GM10248 (cell line): ENCODE measurements at regions of chr5 and their contacts with region 1.

Region 1: DNA sequence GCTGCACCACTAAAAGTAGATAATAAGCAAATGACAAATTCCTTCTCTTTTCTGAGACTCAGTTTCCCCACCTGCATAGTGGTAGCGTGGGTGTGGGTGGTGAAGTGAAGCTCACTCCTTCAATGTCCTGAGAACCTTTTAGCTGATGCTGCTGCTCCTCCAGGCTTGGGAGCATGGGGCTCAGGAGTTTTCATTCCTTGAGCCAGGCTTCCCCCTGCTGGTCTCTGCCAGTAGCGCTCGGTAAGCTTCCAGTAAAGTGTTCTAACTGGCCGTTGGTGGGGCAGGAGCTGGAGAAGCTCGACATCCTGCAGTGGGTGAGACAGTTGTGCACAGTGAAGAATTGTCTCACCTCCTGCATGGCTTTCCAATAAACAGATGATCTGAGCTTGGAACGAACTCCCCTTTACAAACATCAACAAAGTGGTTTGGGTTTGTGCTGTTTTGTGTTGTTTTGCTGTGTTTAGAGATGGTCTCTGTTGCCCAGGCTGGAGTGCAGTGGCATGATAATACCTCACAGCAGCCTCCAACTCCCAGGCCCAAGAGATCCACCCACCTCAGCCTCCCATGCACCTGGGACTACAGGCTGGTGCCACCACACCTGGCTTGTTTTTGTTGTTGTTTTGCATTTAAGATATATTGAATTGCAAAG is 34.6 kb downstream of the SPARC start:
- DNase-seq: peak; percentile 83
- CTCF ChIP-seq: peak; percentile 90

Region 2: DNA sequence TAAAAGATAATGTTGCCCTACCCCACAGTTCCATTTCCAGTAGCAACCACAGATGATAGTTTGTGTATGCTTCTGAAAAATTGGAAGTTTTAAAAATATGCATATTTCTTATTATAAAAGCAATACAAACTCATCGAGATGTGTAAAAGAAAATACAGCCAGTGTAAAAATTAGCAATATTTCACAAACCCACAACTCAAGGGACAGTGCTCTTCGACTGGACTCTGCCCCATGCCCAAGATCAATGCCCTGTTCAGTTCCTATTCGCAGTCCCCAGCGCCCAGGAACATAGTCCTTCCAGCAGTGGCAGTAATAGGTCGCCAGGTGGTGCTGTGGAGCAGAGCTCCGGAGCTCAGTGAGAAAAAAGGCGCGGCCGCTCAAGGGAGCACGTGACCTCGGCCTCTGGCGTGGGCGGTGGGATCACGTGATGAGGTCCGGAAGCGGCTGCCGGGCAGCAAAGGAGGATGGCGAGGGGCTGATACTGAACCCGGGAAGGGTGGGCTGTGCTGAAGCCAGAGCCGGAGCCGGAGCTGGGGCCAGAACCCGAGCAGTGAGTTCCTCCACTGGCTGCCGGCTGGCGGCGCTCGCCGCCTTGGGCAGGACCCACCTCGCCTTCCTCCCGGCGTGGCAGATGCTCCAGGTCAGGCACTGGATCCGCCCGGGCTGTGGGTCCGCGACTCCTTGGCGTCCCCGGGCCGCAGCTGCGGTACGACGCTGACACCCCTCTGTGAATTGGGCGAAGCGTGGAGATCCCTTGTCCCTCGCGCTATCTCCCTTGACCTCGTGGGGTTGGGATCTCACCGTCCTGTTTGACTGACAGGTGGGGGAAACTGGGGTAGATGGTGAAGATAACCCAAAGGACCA is 204.7 kb before region 1 on chr5 and contains the start of gene SLC36A1:
- CTCF ChIA-PET with region 1: interaction called, 42 read pairs
- POLR2A ChIA-PET with region 1: interaction called, 3 read pairs
- DNase-seq: peak; percentile 94
- CTCF ChIP-seq: peak; percentile 92

Region 3: DNA sequence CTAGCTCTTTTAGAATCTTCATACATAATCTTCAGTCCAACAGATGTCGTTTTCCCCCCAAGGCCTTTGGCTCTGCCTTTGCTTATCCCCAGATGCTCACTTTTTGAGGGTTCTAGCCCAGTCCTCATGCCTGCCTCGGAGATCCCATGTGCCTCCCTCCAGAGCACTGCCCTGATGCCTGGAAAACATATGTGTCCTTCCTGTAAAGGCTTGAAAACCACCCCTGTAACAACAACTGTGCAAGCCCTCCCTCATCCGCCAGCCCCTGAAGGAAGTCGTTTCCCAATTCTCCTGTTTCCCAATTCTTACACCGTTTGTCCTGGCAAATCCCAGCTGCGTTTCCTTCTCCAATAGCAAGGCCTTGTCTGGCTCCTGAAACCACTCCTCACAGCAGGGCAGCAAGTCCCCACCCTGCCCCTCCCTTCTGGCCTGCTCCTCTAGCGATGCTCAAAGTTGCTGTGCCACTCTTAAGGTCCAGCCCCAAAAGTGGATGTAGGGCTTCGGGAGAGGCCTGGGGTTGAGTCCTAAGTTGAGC is 152.6 kb before region 1 on chr5:
- CTCF ChIA-PET with region 1: interaction called, 15 read pairs
- POLR2A ChIA-PET with region 1: no interaction called
- DNase-seq: no peak
- CTCF ChIP-seq: no peak

Region 4: DNA sequence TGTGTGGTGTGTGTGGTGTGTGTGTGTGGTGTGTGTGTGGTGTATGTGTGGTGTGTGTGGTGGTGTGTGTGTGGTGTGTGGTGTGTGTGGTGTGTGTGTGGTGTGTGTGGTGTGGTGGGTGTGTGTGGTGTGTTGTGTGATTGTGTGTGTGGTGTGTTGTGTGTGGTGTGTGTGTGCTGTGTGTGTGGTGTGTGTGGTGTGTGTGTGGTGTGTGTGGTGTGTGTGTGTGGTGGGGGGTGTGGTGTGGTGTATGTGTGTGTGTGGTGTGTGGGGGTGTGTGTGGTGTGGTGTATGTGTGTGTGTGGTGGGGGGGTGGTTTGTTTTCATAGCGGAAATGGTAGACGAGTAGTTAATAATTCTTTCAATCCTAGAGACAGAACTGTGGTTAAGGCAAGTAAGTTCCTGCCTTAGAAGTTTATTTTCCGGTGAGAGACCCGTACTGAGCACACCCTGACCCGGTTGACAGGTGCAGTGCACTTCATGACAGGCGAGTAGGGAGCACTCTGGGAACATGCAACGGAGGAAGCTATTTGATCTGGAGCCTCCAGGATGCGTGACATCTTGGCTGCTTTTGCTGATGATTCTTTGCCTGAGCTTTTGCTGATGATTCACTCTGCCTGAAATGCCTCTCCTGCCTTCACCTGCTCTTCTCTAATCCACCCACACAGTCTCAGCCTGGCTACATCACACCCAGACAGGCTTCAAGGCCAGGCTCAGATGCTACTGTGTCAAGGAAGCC is 39.3 kb before region 1 on chr5:
- CTCF ChIA-PET with region 1: interaction called, 37 read pairs
- POLR2A ChIA-PET with region 1: no interaction called
- DNase-seq: peak; percentile 72
- CTCF ChIP-seq: no peak

Region 5: DNA sequence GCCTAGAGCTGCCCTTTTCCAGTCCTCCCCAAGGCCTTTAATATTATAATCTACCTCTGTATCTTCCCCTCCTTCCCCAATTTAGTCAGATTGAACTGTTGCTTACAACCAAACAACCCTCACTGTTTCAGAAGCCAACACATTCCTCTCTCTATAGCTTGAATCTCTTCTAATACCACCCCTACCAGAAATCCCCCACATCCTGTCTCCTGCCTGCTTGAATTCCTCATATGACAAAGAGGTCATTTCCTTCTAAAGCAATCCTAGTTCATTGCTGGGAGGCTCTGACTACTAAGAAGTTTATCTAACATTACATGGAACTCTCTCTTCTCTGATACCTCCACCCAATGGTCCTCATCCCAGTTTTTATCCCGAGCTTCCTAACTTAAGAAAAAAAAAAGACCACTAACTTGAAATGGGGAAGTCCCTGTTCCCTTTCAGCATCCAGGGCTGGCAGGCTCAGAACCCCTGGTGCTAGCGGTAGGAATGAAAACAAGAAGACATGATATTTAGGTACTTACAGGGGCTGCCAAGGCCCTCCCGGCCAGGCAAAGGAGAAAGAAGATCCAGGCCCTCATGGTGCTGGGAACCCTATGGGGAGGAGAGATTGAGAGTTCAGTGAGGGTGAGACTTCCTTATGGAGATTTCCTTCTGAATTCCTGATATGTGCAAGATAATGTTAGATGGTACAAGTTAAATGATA is 23.6 kb after region 1 on chr5:
- CTCF ChIA-PET with region 1: interaction called, 72 read pairs
- POLR2A ChIA-PET with region 1: no interaction called
- DNase-seq: no peak
- CTCF ChIP-seq: no peak

Region 6: GRCh38 chr5:151699071-151699901 is 47.2 kb after region 1 on chr5:
- CTCF ChIA-PET with region 1: interaction called, 25 read pairs
- POLR2A ChIA-PET with region 1: no interaction called
- DNase-seq: no peak
- CTCF ChIP-seq: no peak

Region 7: GRCh38 chr5:151740336-151740942 is 88.3 kb after region 1 on chr5:
- CTCF ChIA-PET with region 1: interaction called, 363 read pairs
- POLR2A ChIA-PET with region 1: no interaction called
- DNase-seq: peak; percentile 76
- CTCF ChIP-seq: peak; percentile 79

Region 8: GRCh38 chr5:151924564-151925301 is 272.6 kb after region 1 on chr5 and contains the start of gene GLRA1:
- CTCF ChIA-PET with region 1: no interaction called
- POLR2A ChIA-PET with region 1: no interaction called
- DNase-seq: peak; percentile 61
- CTCF ChIP-seq: no peak

Region 9: GRCh38 chr5:152309926-152310450 is 657.9 kb after region 1 on chr5:
- CTCF ChIA-PET with region 1: no interaction called
- POLR2A ChIA-PET with region 1: no interaction called
- DNase-seq: no peak
- CTCF ChIP-seq: no peak